ENCODE measurements at regions of chr13 and their contacts with region 1.

Region 1: GRCh38 chr13:113863436-113864272 is at the start of gene GAS6:
- DNase-seq: peak; percentile 39
- ATAC-seq: peak; percentile 70
- H3K4me3 ChIP-seq: peak within 1 kb of the TSS; percentile 98
- H3K27ac ChIP-seq: no peak within 1 kb of the TSS
- H3K4me1 ChIP-seq: peaks cover 4% of the 10 kb centered on the region; the same call in 1 of the 2 replicates
- H3K27me3 ChIP-seq: no peaks in the 10 kb centered on the region
- CTCF ChIP-seq: no peak
- total RNA-seq, gene GAS6: 20.9 and 33.7 TPM in 2 replicates

Region 2: DNA sequence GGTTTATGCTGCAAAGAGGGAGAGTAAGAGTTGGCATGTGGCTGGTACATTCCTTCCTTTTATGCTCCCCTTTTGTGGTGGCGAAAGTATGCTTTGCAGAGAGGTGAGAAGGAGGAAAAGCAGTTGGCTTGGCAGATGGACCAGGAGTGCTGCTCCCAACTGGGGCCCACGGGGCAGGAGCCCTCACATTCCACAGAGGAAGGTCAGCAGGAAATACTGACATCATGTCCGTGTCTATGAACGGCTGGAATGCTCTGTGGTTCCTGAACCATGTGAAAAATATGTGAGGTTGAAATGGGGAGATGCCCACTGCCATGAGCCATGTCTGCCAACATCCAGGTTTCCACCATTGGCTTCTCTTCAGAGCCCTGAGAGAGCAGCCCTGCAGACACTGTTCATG is 33.5 kb after region 1 on chr13:
- CTCF ChIA-PET with region 1: interaction called, 3 read pairs
- POLR2A ChIA-PET with region 1: no interaction called
- intact Hi-C with region 1: loop called (anchors 5 kb)
- DNase-seq: peak; percentile 92
- ATAC-seq: peak; percentile 96
- H3K4me3 ChIP-seq: no peak overlapping the region
- H3K27ac ChIP-seq: peak overlapping the region; percentile 71
- H3K4me1 ChIP-seq: peaks cover 17% of the 10 kb centered on the region
- H3K27me3 ChIP-seq: no peaks in the 10 kb centered on the region
- CTCF ChIP-seq: no peak